B cell (primary cell): ENCODE measurements at regions of chr17 and their contacts with region 1.

Region 1: GRCh38 chr17:28598799-28599310 is at the start of gene SPAG5:
- DNase-seq: peak; percentile 96
- ATAC-seq: peak; percentile 92
- H3K4me3 ChIP-seq: peak within 1 kb of the TSS; percentile 72 to 90 (median 79)
- H3K4me3 Mint-ChIP-seq: peak within 1 kb of the TSS; percentile 98
- H3K27ac ChIP-seq: peak within 1 kb of the TSS; percentile 95 to 98
- H3K27ac Mint-ChIP-seq: peak within 1 kb of the TSS; percentile 98
- H3K4me1 ChIP-seq: peaks cover 19% of the 10 kb centered on the region in 2 donors
- H3K4me1 Mint-ChIP-seq: peaks cover 24% of the 10 kb centered on the region
- H3K27me3 ChIP-seq: no peaks in the 10 kb centered on the region
- H3K27me3 Mint-ChIP-seq: no peaks in the 10 kb centered on the region
- CTCF ChIP-seq: no peak
- total RNA-seq, gene SPAG5: 8.0 and 10.1 TPM in 2 replicates

Region 2: DNA sequence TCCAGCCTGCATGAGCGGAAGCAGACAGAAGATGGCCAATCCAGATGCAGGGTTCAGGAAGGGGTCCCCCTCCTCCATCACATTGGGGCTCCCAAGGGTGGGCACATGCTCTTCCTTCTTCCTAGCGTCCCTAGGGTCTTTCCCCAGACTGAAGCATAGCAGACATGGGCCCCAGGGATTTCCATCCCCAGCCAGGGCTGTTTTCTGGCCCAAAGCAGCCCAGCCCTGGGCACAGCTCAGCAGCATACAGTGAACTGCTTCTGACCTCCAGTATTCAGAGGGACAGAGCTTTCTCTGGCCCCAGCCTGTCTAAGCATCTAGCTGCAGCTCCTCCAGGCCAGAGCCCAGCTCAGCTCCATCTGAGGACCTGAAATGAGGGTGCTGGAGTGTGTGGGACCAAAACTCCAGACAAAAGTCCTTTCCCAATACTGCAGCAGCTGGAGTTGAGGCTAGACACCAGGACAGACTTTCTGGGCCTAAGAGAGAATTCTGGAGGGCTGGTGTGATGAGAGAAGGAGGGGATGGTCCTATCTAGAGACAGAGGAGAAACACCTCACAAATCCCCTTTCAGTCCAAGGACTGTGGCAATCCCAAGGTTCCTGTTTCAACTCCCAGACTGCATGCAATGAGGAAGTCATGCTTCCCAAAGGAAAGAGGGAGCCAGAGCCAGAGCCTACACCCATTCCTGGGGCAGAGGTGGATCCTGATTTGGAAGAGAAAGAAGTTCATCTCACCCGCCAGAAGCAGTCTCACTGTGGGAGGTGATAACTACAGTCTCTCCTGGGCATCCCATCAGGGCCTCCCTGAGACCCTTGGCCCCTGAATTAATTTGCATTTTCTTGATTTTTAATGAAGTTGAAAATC is 97.2 kb before region 1 on chr17:
- CTCF ChIA-PET with region 1: no interaction called
- POLR2A ChIA-PET with region 1: no interaction called
- intact Hi-C with region 1: no loop called
- DNase-seq: no peak
- ATAC-seq: no peak
- H3K4me3 ChIP-seq: no peak overlapping the region
- H3K4me3 Mint-ChIP-seq: no peak overlapping the region
- H3K27ac ChIP-seq: no peak overlapping the region
- H3K27ac Mint-ChIP-seq: peak overlapping the region; percentile 6
- H3K4me1 ChIP-seq: peaks cover 8 to 10% of the 10 kb centered on the region in 2 donors
- H3K4me1 Mint-ChIP-seq: peaks cover 14% of the 10 kb centered on the region
- H3K27me3 ChIP-seq: no peaks in the 10 kb centered on the region
- H3K27me3 Mint-ChIP-seq: no peaks in the 10 kb centered on the region
- CTCF ChIP-seq: no peak

Region 3: DNA sequence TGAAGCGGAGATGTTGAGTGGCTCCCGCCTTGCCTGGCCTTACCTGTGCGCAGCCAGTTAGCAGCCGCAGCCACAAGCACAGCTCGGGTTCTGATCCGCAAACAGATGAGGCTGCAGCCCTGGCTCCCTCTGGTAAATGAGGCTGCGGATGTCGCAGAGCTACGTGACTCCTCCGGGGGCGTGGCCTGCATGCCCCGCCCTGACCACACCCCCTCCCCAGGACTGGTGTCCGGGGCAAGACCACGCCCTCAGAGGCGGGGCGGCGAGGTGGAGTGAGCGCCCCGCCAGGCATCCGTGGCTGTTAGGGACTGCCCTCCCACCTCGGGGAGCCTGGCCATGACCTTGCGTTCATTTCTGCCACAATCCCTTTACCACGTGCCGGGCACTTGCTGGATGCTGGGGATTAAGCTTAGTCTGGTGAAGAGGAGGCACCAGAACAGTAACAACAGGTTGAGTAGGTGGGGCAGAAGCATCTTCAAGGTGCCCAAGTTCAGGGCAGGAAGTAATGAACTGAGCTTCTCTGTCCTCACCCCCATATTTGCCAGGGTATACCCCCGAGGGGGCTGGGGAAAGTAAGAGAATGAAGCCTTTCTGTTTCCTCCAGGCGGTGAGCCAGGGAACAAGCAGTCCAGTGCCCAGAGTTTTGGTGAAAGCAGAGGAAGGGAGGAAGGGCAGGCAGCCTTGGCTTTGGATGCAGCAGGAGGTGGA is 21.9 kb before region 1 on chr17 and contains the start of gene ALDOC:
- CTCF ChIA-PET with region 1: interaction called, 6 read pairs
- POLR2A ChIA-PET with region 1: interaction called, 8 read pairs
- intact Hi-C with region 1: loop called (anchors 1 kb)
- DNase-seq: peak; percentile 97
- ATAC-seq: peak; percentile 100
- H3K4me3 ChIP-seq: peak within 1 kb of the TSS in 4 of 5 experiments; percentile 36 to 58 (median 48)
- H3K4me3 Mint-ChIP-seq: peak within 1 kb of the TSS; percentile 85
- H3K27ac ChIP-seq: peak within 1 kb of the TSS; percentile 34 to 72
- H3K27ac Mint-ChIP-seq: peak within 1 kb of the TSS; percentile 93
- H3K4me1 ChIP-seq: peaks cover 16 to 27% of the 10 kb centered on the region in 2 donors
- H3K4me1 Mint-ChIP-seq: peaks cover 26% of the 10 kb centered on the region
- H3K27me3 ChIP-seq: no peaks in the 10 kb centered on the region
- H3K27me3 Mint-ChIP-seq: no peaks in the 10 kb centered on the region
- CTCF ChIP-seq: no peak
- total RNA-seq, gene ALDOC: 16.7 and 20.7 TPM in 2 replicates

Region 4: DNA sequence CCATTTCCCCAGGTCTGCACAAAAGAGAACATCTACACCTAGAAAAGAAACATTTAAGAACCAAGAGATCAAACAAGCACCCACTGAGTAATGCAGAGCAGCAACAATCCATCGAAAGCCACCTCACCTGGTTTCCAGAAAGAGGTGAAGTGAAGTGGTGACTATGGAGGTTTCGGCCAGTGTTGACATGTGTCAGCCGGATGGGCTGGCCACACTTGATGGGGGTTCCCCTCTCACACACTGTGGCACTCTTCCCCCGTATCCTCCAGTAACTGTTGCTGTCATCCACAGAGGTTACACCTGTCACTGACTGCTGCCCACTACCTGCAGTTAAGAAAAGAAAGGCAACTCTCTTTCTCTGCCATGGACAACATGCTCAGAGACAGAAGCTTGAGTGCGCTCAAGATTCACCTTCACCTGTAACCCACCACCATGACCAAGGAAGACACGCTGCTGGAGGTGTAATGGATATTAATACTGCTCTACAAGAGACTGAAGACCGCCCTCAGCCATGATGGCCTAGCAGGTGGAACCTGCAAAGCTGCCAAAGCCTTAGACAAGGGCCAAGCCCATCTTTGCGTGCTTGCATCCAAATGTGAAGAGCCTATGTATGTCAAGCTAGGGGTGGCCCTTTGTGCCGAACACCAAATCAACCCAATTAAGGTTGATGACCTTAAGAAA is 56.4 kb after region 1 on chr17:
- CTCF ChIA-PET with region 1: no interaction called
- POLR2A ChIA-PET with region 1: no interaction called
- intact Hi-C with region 1: no loop called
- DNase-seq: no peak
- ATAC-seq: no peak
- H3K4me3 ChIP-seq: no peak overlapping the region
- H3K4me3 Mint-ChIP-seq: no peak overlapping the region
- H3K27ac ChIP-seq: no peak overlapping the region
- H3K27ac Mint-ChIP-seq: no peak overlapping the region
- H3K4me1 ChIP-seq: peaks cover 0 to under 1% of the 10 kb centered on the region in 2 donors
- H3K4me1 Mint-ChIP-seq: peaks cover 8% of the 10 kb centered on the region
- H3K27me3 ChIP-seq: no peaks in the 10 kb centered on the region
- H3K27me3 Mint-ChIP-seq: no peaks in the 10 kb centered on the region
- CTCF ChIP-seq: no peak